Esophagus muscularis mucosa (tissue), 4 donors: ENCODE measurements at regions of chr14 and their contacts with region 1.

Region 1: GRCh38 chr14:72516936-72517700 is 376.8 kb downstream of the DPF3 start:
- DNase-seq: no peak
- H3K4me3 ChIP-seq: no peak overlapping the region
- H3K27ac ChIP-seq: no peak overlapping the region
- H3K4me1 ChIP-seq: peaks cover 0 to 9% (median 7%) of the 10 kb centered on the region in 4 donors
- H3K27me3 ChIP-seq: peaks cover 0 to 1% (median 0%) of the 10 kb centered on the region in 4 donors
- CTCF ChIP-seq: peak; percentile 82 to 90 (median 87)
- EP300 ChIP-seq: no peak
- POLR2A ChIP-seq: no peak

Region 2: DNA sequence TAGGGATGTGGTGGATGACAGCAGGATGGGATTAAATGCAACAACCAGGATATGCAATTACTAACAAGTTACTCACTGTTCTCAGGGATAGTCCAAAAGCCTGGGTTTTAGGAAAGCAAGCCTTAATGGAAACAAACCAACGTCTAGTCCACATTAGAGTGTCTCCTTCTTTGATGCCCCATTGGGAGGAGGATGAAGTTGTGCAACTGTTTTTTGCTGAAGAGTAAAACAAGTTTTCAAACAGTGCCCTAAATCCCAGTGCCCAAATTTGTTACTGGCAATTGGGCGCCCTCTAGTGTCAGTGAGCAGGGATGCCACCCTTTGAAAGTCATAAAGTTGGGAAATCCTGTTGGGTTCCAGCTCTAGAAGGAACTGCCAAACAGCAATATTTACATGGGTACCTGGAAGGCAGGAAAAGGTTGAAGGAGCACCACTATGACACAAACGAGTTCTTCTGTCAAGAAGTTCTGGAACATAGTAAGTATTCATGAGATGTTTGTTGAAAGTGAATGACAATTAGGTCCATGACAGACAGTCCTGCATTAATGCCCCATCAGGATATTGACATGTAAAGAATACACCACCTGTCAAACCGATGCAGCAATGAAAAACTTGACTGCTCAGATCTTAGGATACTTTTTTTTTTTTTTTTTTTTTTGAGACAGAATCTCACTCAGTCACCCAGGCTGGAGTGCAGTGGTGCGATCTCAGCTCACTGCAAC is 387.9 kb after region 1 on chr14:
- intact Hi-C with region 1: loop called (anchors 1 kb)
- DNase-seq: no peak
- H3K4me3 ChIP-seq: no peak overlapping the region
- H3K27ac ChIP-seq: no peak overlapping the region
- H3K4me1 ChIP-seq: peaks cover 0 to 41% (median 13%) of the 10 kb centered on the region in 4 donors
- H3K27me3 ChIP-seq: peaks cover 0 to 7% (median 0%) of the 10 kb centered on the region in 4 donors
- CTCF ChIP-seq: peak; percentile 88 to 96 (median 92)
- EP300 ChIP-seq: no peak
- POLR2A ChIP-seq: no peak

Region 3: GRCh38 chr14:72948481-72949138 is 431.5 kb after region 1 on chr14:
- intact Hi-C with region 1: loop called (anchors 1 kb)
- DNase-seq: no peak
- H3K4me3 ChIP-seq: no peak overlapping the region
- H3K27ac ChIP-seq: no peak overlapping the region
- H3K4me1 ChIP-seq: no peaks in the 10 kb centered on the region
- H3K27me3 ChIP-seq: no peaks in the 10 kb centered on the region
- CTCF ChIP-seq: peak; percentile 71 to 90 (median 85)
- EP300 ChIP-seq: no peak
- POLR2A ChIP-seq: no peak